ENCODE measurements at regions of chr10 and their contacts with region 1.

Region 1: GRCh38 chr10:119542988-119543813 is 682 bp upstream of the RGS10 start:
- DNase-seq: peak; percentile 47 to 85 (median 63)
- ATAC-seq: peak; percentile 48
- H3K4me3 ChIP-seq: peak overlapping the region; percentile 92
- H3K4me3 Mint-ChIP-seq: peak overlapping the region; percentile 98
- H3K27ac ChIP-seq: peak overlapping the region in 1 of 2 donors; percentile 84
- H3K27ac Mint-ChIP-seq: peak overlapping the region; percentile 88
- H3K4me1 ChIP-seq: peaks cover 40% of the 10 kb centered on the region
- H3K4me1 Mint-ChIP-seq: peaks cover 41% of the 10 kb centered on the region
- H3K27me3 ChIP-seq: no peaks in the 10 kb centered on the region
- H3K27me3 Mint-ChIP-seq: no peaks in the 10 kb centered on the region
- CTCF ChIP-seq: peak; percentile 85

Region 2: GRCh38 chr10:119178372-119179119 is 364.7 kb before region 1 on chr10 and contains the start of gene PRDX3:
- CTCF ChIA-PET with region 1: no interaction called
- POLR2A ChIA-PET with region 1: no interaction called
- intact Hi-C with region 1: loop called in 1 of 2 experiments (anchors 1 kb)
- DNase-seq: peak; percentile 85 to 96 (median 91)
- ATAC-seq: peak; percentile 97
- H3K4me3 ChIP-seq: peak within 1 kb of the TSS; percentile 93
- H3K4me3 Mint-ChIP-seq: peak within 1 kb of the TSS; percentile 98
- H3K27ac ChIP-seq: peak within 1 kb of the TSS; percentile 71 to 80
- H3K27ac Mint-ChIP-seq: peak within 1 kb of the TSS; percentile 95
- H3K4me1 ChIP-seq: peaks cover 32% of the 10 kb centered on the region
- H3K4me1 Mint-ChIP-seq: peaks cover 35% of the 10 kb centered on the region
- H3K27me3 ChIP-seq: no peaks in the 10 kb centered on the region
- H3K27me3 Mint-ChIP-seq: no peaks in the 10 kb centered on the region
- CTCF ChIP-seq: peak; percentile 19
- total RNA-seq, gene PRDX3: 7.1 to 7.5 TPM

Region 3: DNA sequence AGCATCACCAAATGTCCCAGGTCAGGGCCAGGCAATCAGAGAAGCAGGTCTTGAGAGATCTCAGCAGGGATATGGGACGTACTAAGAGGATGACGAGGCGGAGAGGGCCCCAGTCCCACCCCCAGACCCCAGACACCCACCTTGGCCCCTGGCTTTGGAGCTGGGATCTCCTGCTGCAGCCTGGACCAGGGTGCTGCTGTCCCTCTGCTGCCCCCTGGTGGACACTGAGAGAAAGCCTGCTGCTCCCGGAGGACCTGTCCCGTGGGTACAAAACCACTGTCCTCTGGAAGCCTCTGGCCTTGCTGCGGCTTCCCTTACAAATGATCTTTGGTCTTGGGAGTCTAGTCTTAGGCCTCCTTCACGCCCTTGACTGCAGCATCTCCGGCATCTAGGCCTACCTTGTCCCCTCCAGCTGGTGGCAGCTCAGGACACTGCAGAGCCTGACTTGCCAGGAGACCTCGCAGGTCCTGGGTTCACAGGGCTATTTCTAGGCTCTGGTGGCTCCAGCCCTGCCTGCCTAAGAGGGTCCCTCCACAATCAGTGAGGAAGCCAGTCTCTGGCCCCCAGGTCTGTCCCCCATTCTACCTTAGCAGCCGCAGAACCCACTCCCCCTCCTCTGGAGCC is 97.8 kb before region 1 on chr10:
- CTCF ChIA-PET with region 1: interaction called, 12 read pairs
- POLR2A ChIA-PET with region 1: interaction called, 4 read pairs
- intact Hi-C with region 1: loop called (anchors 1 to 2 kb)
- DNase-seq: peak; percentile 75 to 93 (median 82)
- ATAC-seq: peak; percentile 90
- H3K4me3 ChIP-seq: no peak overlapping the region
- H3K4me3 Mint-ChIP-seq: no peak overlapping the region
- H3K27ac ChIP-seq: no peak overlapping the region
- H3K27ac Mint-ChIP-seq: no peak overlapping the region
- H3K4me1 ChIP-seq: peaks cover 9% of the 10 kb centered on the region
- H3K4me1 Mint-ChIP-seq: peaks cover 20% of the 10 kb centered on the region
- H3K27me3 ChIP-seq: no peaks in the 10 kb centered on the region
- H3K27me3 Mint-ChIP-seq: no peaks in the 10 kb centered on the region
- CTCF ChIP-seq: peak; percentile 83

Region 4: GRCh38 chr10:119502209-119502608 is 41.0 kb before region 1 on chr10:
- CTCF ChIA-PET with region 1: interaction called, 8 read pairs
- POLR2A ChIA-PET with region 1: interaction called, 74 read pairs
- intact Hi-C with region 1: loop called (anchors 1 to 5 kb)
- DNase-seq: peak; percentile 64 to 96 (median 88)
- ATAC-seq: peak; percentile 84
- H3K4me3 ChIP-seq: peak overlapping the region; percentile 17
- H3K4me3 Mint-ChIP-seq: peak overlapping the region; percentile 80
- H3K27ac ChIP-seq: peak overlapping the region; percentile 78 to 95
- H3K27ac Mint-ChIP-seq: peak overlapping the region; percentile 99
- H3K4me1 ChIP-seq: peaks cover 92% of the 10 kb centered on the region
- H3K4me1 Mint-ChIP-seq: peaks cover 94% of the 10 kb centered on the region
- H3K27me3 ChIP-seq: no peaks in the 10 kb centered on the region
- H3K27me3 Mint-ChIP-seq: no peaks in the 10 kb centered on the region
- CTCF ChIP-seq: no peak

Region 5: GRCh38 chr10:119596537-119597404 is 53.6 kb after region 1 on chr10 and contains the start of gene TIAL1:
- CTCF ChIA-PET with region 1: interaction called, 4 read pairs
- POLR2A ChIA-PET with region 1: interaction called, 8 read pairs
- intact Hi-C with region 1: loop called (anchors 1 to 2 kb)
- DNase-seq: peak; percentile 82 to 97 (median 90)
- ATAC-seq: peak; percentile 82
- H3K4me3 ChIP-seq: peak within 1 kb of the TSS; percentile 70
- H3K4me3 Mint-ChIP-seq: peak within 1 kb of the TSS; percentile 98
- H3K27ac ChIP-seq: peak within 1 kb of the TSS; percentile 87 to 96
- H3K27ac Mint-ChIP-seq: peak within 1 kb of the TSS; percentile 95
- H3K4me1 ChIP-seq: peaks cover 22% of the 10 kb centered on the region
- H3K4me1 Mint-ChIP-seq: peaks cover 60% of the 10 kb centered on the region
- H3K27me3 ChIP-seq: no peaks in the 10 kb centered on the region
- H3K27me3 Mint-ChIP-seq: no peaks in the 10 kb centered on the region
- CTCF ChIP-seq: no peak
- total RNA-seq, gene TIAL1: 159 to 174 TPM

Region 6: DNA sequence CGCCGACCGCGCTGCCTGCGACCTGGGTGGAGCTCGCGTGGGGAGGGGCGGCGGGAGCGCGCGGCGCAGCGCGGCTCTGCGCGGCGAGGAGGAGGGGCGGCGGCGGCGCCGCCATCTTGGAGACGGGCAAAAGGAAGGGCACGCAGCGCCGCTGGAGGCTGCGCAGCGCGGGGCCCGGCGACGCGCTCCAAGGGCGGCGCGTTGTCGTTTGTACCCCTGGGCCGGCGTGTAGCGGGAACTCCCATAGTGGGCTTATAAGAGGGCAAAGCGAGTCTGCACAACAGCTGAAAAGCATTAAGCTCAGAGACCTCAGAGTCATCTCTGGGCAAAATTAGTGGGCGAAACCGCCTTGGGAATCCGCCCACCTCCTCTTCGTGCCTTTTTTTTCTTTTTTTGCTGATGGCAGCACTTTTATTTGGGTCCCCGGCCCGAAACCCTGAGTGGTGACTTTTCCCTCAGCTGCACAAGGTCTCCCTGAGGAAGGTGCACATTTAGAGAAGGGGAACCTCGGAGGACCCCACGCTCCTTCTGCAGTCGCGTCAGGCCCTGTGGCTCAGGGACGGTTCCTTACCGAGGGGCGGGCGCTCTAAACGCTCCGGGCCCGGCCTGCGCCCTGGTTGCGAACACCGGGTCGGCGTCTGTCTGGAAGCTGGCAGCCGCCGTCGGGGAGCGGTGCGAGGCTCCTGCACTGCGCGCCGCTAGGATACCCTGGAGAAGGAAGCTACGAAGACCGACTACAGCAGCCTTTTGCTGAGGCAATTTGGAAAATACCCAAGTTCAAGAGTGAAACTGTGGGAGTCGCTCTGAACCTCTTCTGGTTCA is 329.9 kb after region 1 on chr10:
- CTCF ChIA-PET with region 1: no interaction called
- POLR2A ChIA-PET with region 1: interaction called, 14 read pairs
- intact Hi-C with region 1: no loop called
- DNase-seq: peak; percentile 78 to 96 (median 86)
- ATAC-seq: peak; percentile 90
- H3K4me3 ChIP-seq: peak overlapping the region; percentile 80
- H3K4me3 Mint-ChIP-seq: peak overlapping the region; percentile 93
- H3K27ac ChIP-seq: peak overlapping the region; percentile 78 to 87
- H3K27ac Mint-ChIP-seq: peak overlapping the region; percentile 94
- H3K4me1 ChIP-seq: peaks cover 37% of the 10 kb centered on the region
- H3K4me1 Mint-ChIP-seq: peaks cover 35% of the 10 kb centered on the region
- H3K27me3 ChIP-seq: no peaks in the 10 kb centered on the region
- H3K27me3 Mint-ChIP-seq: no peaks in the 10 kb centered on the region
- CTCF ChIP-seq: no peak

Region 7: DNA sequence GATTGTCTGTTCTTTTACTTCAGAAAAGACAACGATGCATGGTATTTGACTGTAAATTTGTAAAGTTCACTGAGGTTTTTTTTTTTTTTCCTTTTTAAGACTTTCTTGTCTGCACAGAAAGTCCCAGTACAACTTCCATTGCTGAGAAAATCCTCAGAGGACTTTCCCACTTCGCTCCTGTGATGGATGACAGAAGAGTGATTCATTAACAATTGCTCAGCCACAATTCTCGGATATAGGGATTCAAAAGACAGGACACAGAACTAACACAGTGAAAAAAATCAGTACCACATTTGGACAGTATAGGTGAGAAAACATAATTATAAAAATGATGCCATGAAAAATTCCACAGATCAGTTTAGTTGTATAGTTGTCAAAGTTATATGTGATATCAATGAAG is 397.3 kb after region 1 on chr10:
- CTCF ChIA-PET with region 1: no interaction called
- POLR2A ChIA-PET with region 1: no interaction called
- intact Hi-C with region 1: no loop called
- DNase-seq: no peak
- ATAC-seq: no peak
- H3K4me3 ChIP-seq: no peak overlapping the region
- H3K4me3 Mint-ChIP-seq: no peak overlapping the region
- H3K27ac ChIP-seq: no peak overlapping the region
- H3K27ac Mint-ChIP-seq: no peak overlapping the region
- H3K4me1 ChIP-seq: no peaks in the 10 kb centered on the region
- H3K4me1 Mint-ChIP-seq: no peaks in the 10 kb centered on the region
- H3K27me3 ChIP-seq: no peaks in the 10 kb centered on the region
- H3K27me3 Mint-ChIP-seq: no peaks in the 10 kb centered on the region
- CTCF ChIP-seq: no peak

Measured in CD4-positive, alpha-beta T cell (primary cell).